ENCODE measurements at regions of chr9 and their contacts with region 1.

Region 1: GRCh38 chr9:112717661-112718341 is at the start of gene INIP:
- DNase-seq: peak; percentile 99
- H3K4me3 Mint-ChIP-seq: peak within 1 kb of the TSS; percentile 84
- H3K27ac Mint-ChIP-seq: peak within 1 kb of the TSS; percentile 98
- H3K4me1 Mint-ChIP-seq: peaks cover 27% of the 10 kb centered on the region
- H3K27me3 Mint-ChIP-seq: no peaks in the 10 kb centered on the region

Region 2: DNA sequence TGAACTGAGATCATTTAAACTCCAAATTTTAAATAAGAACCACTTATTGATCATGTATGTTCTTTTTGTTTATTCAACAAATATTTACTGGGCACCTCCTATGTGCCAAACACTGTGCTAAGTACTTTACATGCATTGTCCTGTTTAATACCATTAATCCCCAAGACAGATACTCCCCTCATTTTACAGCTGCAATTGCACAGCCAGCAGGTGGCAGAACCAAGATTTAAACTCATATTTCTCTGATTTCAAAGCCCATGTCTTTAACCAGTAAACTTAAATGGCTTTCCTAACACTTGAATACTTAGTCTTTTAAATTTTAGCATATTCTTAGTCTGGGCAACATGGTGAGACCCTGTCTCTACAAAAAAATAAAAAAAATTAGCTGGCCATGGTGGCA is 274.6 kb before region 1 on chr9:
- CTCF ChIA-PET with region 1: interaction called, 11 read pairs
- DNase-seq: peak; percentile 50
- H3K4me3 Mint-ChIP-seq: no peak overlapping the region
- H3K27ac Mint-ChIP-seq: no peak overlapping the region
- H3K4me1 Mint-ChIP-seq: no peaks in the 10 kb centered on the region
- H3K27me3 Mint-ChIP-seq: no peaks in the 10 kb centered on the region

Region 3: GRCh38 chr9:112793213-112793810 is 75.5 kb after region 1 on chr9:
- CTCF ChIA-PET with region 1: interaction called, 13 read pairs
- DNase-seq: peak; percentile 89
- H3K4me3 Mint-ChIP-seq: no peak overlapping the region
- H3K27ac Mint-ChIP-seq: peak overlapping the region; percentile 15
- H3K4me1 Mint-ChIP-seq: peaks cover 7% of the 10 kb centered on the region
- H3K27me3 Mint-ChIP-seq: peaks cover 4% of the 10 kb centered on the region